ENCODE measurements at regions of chr21 and their contacts with region 1.

Region 1: GRCh38 chr21:45554477-45555175 is 12.4 kb upstream of the SLC19A1 start:
- DNase-seq: peak; percentile 95
- H3K4me3 ChIP-seq: peak overlapping the region; percentile 60 to 90
- H3K27ac ChIP-seq: peak overlapping the region; percentile 56 to 82; a peak in 3 of 4 replicates
- H3K4me1 ChIP-seq: peaks cover 0 to 18% of the 10 kb centered on the region in 2 experiments; a peak in 1 of 4 replicates
- H3K27me3 ChIP-seq: no peaks in the 10 kb centered on the region
- CTCF ChIP-seq: peak; percentile 69
- EP300 ChIP-seq: no peak
- RAD21 ChIP-seq: peak; percentile 72

Region 2: GRCh38 chr21:45341779-45342178 is 212.8 kb before region 1 on chr21:
- CTCF ChIA-PET with region 1: no interaction called
- POLR2A ChIA-PET with region 1: no interaction called
- DNase-seq: no peak
- H3K4me3 ChIP-seq: no peak overlapping the region
- H3K27ac ChIP-seq: no peak overlapping the region
- H3K4me1 ChIP-seq: peaks cover 0 to 2% of the 10 kb centered on the region in 2 experiments; a peak in 1 of 4 replicates
- H3K27me3 ChIP-seq: no peaks in the 10 kb centered on the region
- CTCF ChIP-seq: no peak
- EP300 ChIP-seq: no peak
- RAD21 ChIP-seq: no peak

Region 3: GRCh38 chr21:45578176-45578801 is 23.7 kb after region 1 on chr21:
- CTCF ChIA-PET with region 1: interaction called, 44 read pairs
- POLR2A ChIA-PET with region 1: no interaction called
- DNase-seq: peak; percentile 36
- H3K4me3 ChIP-seq: no peak overlapping the region
- H3K27ac ChIP-seq: no peak overlapping the region
- H3K4me1 ChIP-seq: peaks cover 0 to 52% of the 10 kb centered on the region in 2 experiments; a peak in 1 of 4 replicates
- H3K27me3 ChIP-seq: no peaks in the 10 kb centered on the region
- CTCF ChIP-seq: no peak
- EP300 ChIP-seq: no peak
- RAD21 ChIP-seq: no peak

Region 4: DNA sequence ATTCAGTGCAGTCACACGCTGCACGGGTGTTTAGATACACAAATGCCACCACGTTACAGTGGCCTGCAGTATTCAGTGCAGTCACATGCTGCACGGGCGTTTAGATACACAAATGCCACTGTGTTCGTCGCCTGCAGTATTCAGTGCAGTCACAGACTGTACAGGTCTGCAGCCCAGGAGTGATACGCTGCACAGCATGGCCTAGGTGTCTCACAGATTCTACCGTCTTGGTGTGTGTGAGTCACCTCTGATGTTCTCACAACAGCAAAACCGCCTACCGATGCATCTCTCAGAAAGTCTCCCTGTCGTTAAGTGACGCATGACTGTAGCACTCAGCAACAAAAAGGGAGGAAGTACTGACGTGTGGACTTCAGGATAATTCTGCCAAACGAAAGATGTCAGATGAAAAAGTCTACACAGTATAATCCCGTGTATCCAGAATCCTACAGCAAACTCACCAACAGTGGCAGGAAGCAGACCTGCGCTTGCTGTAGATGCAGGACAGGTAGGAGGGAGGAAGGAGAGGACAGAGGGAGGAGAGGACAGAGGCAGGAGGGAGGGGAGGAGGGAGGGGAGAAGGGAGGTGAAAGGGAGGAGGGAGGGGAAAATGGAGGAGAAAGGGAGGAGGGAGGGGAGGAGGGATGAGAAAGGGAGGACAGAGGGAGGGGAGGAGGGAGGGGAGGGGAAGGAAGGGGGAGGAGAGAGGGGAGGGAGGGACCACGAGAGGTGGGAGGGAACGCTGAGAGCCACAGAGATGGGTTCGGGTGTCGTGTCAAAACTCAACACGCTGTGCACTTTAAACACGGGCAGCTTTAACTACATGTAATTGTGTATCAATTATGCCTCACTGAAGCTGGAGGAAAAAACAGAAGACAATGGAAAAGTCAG is 52.6 kb after region 1 on chr21:
- CTCF ChIA-PET with region 1: interaction called, 135 read pairs
- POLR2A ChIA-PET with region 1: interaction called, 3 read pairs
- DNase-seq: peak; percentile 63
- H3K4me3 ChIP-seq: peak overlapping the region; percentile 26 to 53; a peak in 3 of 4 replicates
- H3K27ac ChIP-seq: no peak overlapping the region
- H3K4me1 ChIP-seq: peaks cover 2 to 11% of the 10 kb centered on the region in 2 experiments; a peak in 2 of 4 replicates
- H3K27me3 ChIP-seq: peaks cover 19% of the 10 kb centered on the region
- CTCF ChIP-seq: no peak
- EP300 ChIP-seq: no peak
- RAD21 ChIP-seq: no peak

Region 5: DNA sequence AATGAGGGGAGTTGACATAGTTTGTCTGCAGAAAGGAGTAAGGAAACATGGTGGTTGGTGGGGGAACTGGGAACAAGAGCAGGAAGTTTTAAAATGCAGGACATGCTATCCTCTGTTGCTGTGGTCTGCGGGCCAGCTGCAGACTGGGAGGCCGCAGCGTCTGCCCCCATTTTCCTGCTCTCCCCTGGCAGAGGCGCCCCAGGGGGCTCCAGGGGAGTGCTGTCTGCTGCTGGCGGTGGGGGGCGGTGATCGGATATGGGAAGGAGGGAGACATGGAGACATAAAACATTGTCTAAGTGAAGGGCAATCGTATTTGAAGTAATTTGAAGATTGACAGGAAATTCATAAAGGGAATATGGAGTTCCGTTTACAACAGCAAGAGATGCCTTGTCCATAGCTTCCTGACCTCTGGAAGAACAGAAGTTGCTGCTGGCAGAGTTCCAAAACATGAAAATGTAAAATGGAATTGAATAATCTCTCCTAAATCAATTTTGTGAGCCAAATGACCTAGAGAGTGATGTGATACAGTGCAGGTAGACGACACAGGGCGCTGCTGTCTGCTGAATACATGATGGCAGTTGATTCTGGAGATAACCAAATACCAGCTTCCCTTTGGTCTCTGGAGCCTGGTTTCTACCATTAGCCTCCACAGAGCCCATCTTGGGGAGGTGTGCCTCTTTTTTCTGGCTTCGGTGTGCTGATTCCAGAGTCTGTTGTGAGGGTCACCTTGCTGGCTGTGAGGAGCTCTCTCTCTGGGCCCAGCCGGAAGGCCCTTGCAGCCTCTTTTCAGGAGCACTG is 149.9 kb after region 1 on chr21:
- CTCF ChIA-PET with region 1: interaction called, 15 read pairs
- POLR2A ChIA-PET with region 1: interaction called, 7 read pairs
- DNase-seq: peak; percentile 73
- H3K4me3 ChIP-seq: no peak overlapping the region
- H3K27ac ChIP-seq: peak overlapping the region in 1 of 2 experiments; percentile 98; a peak in 2 of 4 replicates
- H3K4me1 ChIP-seq: peaks cover 10 to 59% of the 10 kb centered on the region in 2 experiments; a peak in 3 of 4 replicates
- H3K27me3 ChIP-seq: no peaks in the 10 kb centered on the region
- CTCF ChIP-seq: no peak
- EP300 ChIP-seq: peak in 1 of 2 experiments; percentile 91; a peak in 2 of 4 replicates
- RAD21 ChIP-seq: peak; percentile 35; the same call in 1 of the 2 replicates

Region 6: DNA sequence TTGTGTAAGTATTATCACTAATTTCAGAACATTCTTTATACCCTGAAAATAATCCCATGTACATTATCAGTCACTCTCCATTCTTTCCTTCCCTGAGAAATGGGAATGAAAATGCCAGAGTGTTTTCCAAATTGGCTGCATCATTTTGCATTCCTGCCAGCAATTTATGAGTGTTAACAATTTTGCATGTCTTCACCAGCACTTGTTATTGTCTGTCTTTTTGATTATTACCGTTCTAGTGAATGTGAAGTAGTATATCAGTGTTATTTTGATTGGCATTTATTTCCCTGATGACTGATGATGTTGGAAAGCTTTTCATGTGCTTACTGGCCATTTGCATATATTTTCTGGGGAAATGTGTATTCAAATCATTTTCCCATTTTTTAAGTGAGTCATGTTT is 160.8 kb after region 1 on chr21:
- CTCF ChIA-PET with region 1: no interaction called
- POLR2A ChIA-PET with region 1: no interaction called
- DNase-seq: no peak
- H3K4me3 ChIP-seq: no peak overlapping the region
- H3K27ac ChIP-seq: no peak overlapping the region
- H3K4me1 ChIP-seq: peaks cover 0 to 7% of the 10 kb centered on the region in 2 experiments; a peak in 1 of 4 replicates
- H3K27me3 ChIP-seq: no peaks in the 10 kb centered on the region
- CTCF ChIP-seq: no peak
- EP300 ChIP-seq: no peak
- RAD21 ChIP-seq: no peak

Region 7: DNA sequence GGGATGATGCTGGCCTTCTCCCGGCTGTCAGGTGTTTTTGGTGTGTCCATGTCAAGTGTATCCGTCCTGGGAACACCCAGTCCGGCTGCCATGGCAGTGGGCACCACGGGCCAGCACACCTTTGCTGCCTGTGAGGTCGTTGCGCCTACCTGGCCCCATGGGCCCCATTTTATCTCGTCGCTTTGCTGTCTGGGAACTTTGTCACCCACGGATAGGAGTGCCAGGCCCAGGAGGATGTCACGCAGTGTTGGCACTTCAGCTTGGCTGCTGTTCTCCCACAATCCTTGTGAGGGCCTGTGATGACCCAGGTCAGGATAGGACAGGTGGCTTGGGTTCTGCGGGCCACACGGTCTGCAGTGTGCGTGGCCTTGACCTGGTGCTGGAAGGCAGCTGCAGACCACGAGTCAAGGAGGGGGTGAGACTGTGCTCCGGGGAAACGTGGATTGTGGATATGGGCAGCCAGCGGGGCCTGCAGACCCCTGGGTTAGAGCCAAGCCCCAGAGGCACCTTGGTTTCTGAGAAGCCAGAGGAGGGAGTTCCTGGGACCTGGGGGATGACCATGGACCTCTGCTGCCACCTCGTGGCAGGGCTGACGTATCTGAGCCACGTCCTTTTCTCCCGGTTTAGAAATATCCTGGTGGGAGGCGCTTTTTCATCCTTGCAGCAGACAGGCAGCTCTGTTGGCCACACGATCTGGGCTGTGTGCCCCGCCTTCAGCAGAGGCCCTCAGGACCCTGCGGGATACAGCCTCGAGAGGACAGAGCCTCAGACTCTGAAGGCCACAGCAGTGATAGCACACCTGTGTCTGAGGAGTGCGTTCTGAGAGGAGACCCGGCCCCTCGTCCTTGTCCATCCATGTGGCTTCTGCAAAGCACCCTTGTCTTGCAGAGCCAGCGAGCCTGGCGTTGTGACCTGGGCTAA is 265.8 kb after region 1 on chr21:
- CTCF ChIA-PET with region 1: interaction called, 127 read pairs
- POLR2A ChIA-PET with region 1: interaction called, 18 read pairs
- DNase-seq: peak; percentile 93
- H3K4me3 ChIP-seq: no peak overlapping the region
- H3K27ac ChIP-seq: peak overlapping the region in 1 of 2 experiments; percentile 99; a peak in 2 of 4 replicates
- H3K4me1 ChIP-seq: peaks cover 8 to 35% of the 10 kb centered on the region in 2 experiments; a peak in 2 of 4 replicates
- H3K27me3 ChIP-seq: no peaks in the 10 kb centered on the region
- CTCF ChIP-seq: peak; percentile 82
- EP300 ChIP-seq: peak in 1 of 2 experiments; percentile 44; a peak in 2 of 4 replicates
- RAD21 ChIP-seq: peak; percentile 98

Measured in SK-N-SH (cell line).